IMR-90 (cell line): ENCODE measurements at regions of chr4 and their contacts with region 1.

Region 1: GRCh38 chr4:170047771-170048354 is 21.7 kb upstream of the MFAP3L start:
- DNase-seq: peak; percentile 71
- ATAC-seq: no peak
- H3K4me3 ChIP-seq: no peak overlapping the region
- H3K27ac ChIP-seq: no peak overlapping the region
- H3K4me1 ChIP-seq: no peaks in the 10 kb centered on the region
- H3K27me3 ChIP-seq: peaks cover 6% of the 10 kb centered on the region
- CTCF ChIP-seq: peak; percentile 86
- POLR2A ChIP-seq: no peak
- RAD21 ChIP-seq: peak; percentile 74

Region 2: GRCh38 chr4:169059306-169060211 is 988.3 kb before region 1 on chr4:
- CTCF ChIA-PET with region 1: no interaction called
- POLR2A ChIA-PET with region 1: no interaction called
- dilution Hi-C with region 1: no loop called
- in situ Hi-C with region 1: no loop called
- intact Hi-C with region 1: no loop called
- DNase-seq: no peak
- ATAC-seq: no peak
- H3K4me3 ChIP-seq: no peak overlapping the region
- H3K27ac ChIP-seq: no peak overlapping the region
- H3K4me1 ChIP-seq: peaks cover 12% of the 10 kb centered on the region
- H3K27me3 ChIP-seq: no peaks in the 10 kb centered on the region
- CTCF ChIP-seq: no peak
- POLR2A ChIP-seq: no peak
- RAD21 ChIP-seq: no peak

Region 3: GRCh38 chr4:169506903-169507302 is 541.0 kb before region 1 on chr4:
- CTCF ChIA-PET with region 1: no interaction called
- POLR2A ChIA-PET with region 1: no interaction called
- dilution Hi-C with region 1: no loop called
- in situ Hi-C with region 1: no loop called
- intact Hi-C with region 1: loop called (anchors 10 kb)
- DNase-seq: no peak
- ATAC-seq: no peak
- H3K4me3 ChIP-seq: no peak overlapping the region
- H3K27ac ChIP-seq: no peak overlapping the region
- H3K4me1 ChIP-seq: no peaks in the 10 kb centered on the region
- H3K27me3 ChIP-seq: no peaks in the 10 kb centered on the region
- CTCF ChIP-seq: no peak
- POLR2A ChIP-seq: no peak
- RAD21 ChIP-seq: no peak

Region 4: DNA sequence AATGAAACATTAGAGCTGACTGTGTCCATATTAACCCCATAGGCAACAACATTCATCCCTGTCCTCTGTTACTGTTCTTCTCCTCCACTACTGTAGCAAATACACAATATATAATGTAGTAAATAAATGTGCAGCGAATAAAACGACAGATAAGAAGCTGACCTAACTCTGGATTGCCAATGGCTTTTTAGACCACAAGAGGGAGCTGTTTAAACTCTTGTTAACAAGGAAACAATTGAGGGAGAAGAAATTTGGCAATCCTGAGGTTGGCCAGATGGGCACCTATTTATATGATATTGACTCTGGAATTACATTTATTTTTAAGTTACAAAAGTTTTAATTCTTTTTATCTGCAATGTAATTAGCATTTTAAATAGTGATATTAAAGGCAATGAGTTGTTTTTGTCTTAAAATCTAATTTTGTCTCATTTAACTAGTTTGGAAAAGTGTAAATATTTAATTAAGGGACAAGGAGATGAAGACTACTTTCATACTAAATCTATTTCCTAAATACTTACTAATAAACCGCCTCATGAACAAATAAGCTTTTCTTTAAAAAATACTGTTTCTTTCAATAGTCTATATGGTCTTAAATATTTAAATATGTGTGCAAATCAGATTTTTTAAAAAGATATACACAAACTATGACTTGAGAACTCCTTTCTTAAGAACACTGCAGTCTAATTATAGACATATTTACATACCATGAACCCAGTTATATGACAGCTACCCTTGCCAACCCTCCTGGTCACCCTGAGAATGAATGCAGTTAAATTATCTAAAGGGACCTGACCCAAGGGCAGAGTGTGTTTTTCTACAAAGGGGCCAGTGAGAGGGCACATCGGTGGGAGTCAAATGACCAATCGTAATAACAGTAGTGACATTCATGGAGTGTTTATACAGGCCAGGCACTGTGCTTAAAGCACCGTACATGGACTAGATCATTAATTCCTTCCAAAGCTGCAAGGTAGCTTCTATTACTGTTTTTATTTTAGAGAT is 237.2 kb before region 1 on chr4:
- CTCF ChIA-PET with region 1: interaction called, 18 read pairs
- POLR2A ChIA-PET with region 1: no interaction called
- dilution Hi-C with region 1: no loop called
- in situ Hi-C with region 1: loop called (anchors 5 kb)
- intact Hi-C with region 1: loop called (anchors 1 kb)
- DNase-seq: peak; percentile 81
- ATAC-seq: peak; percentile 61
- H3K4me3 ChIP-seq: no peak overlapping the region
- H3K27ac ChIP-seq: no peak overlapping the region
- H3K4me1 ChIP-seq: no peaks in the 10 kb centered on the region
- H3K27me3 ChIP-seq: no peaks in the 10 kb centered on the region; the same call in 1 of the 2 replicates
- CTCF ChIP-seq: peak; percentile 86
- POLR2A ChIP-seq: no peak
- RAD21 ChIP-seq: peak; percentile 63

Region 5: GRCh38 chr4:170058826-170059225 is 11.0 kb after region 1 on chr4:
- CTCF ChIA-PET with region 1: interaction called, 10 read pairs
- POLR2A ChIA-PET with region 1: no interaction called
- dilution Hi-C with region 1: no loop called
- in situ Hi-C with region 1: no loop called
- intact Hi-C with region 1: no loop called
- DNase-seq: no peak
- ATAC-seq: no peak
- H3K4me3 ChIP-seq: no peak overlapping the region
- H3K27ac ChIP-seq: no peak overlapping the region
- H3K4me1 ChIP-seq: no peaks in the 10 kb centered on the region
- H3K27me3 ChIP-seq: no peaks in the 10 kb centered on the region
- CTCF ChIP-seq: no peak
- POLR2A ChIP-seq: no peak
- RAD21 ChIP-seq: no peak

Region 6: DNA sequence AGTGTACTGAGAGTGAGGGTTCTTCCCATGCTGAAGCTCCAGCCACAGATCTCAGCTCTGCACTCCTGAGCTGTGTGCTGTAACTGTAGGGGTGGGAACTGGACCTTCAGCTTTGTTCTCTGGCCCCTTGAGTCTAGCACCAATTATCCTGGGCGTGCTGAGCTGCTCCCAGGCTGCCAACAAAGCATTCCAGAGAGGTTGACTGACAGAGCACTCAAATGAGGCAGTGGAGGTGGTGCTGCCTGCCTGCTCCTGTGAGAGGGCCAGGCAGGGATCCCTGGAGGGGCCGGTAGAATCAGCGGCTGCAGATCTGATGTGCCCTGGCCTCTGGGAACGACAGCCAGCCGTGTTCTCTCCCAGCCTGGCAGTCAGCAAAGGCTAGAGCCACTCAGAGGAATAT is 417.6 kb after region 1 on chr4:
- CTCF ChIA-PET with region 1: no interaction called
- POLR2A ChIA-PET with region 1: no interaction called
- dilution Hi-C with region 1: no loop called
- in situ Hi-C with region 1: no loop called
- intact Hi-C with region 1: no loop called
- DNase-seq: no peak
- ATAC-seq: no peak
- H3K4me3 ChIP-seq: no peak overlapping the region
- H3K27ac ChIP-seq: no peak overlapping the region
- H3K4me1 ChIP-seq: no peaks in the 10 kb centered on the region
- H3K27me3 ChIP-seq: no peaks in the 10 kb centered on the region
- CTCF ChIP-seq: no peak
- POLR2A ChIP-seq: no peak
- RAD21 ChIP-seq: no peak